ENCODE measurements at regions of chr11 and their contacts with region 1.

Region 1: DNA sequence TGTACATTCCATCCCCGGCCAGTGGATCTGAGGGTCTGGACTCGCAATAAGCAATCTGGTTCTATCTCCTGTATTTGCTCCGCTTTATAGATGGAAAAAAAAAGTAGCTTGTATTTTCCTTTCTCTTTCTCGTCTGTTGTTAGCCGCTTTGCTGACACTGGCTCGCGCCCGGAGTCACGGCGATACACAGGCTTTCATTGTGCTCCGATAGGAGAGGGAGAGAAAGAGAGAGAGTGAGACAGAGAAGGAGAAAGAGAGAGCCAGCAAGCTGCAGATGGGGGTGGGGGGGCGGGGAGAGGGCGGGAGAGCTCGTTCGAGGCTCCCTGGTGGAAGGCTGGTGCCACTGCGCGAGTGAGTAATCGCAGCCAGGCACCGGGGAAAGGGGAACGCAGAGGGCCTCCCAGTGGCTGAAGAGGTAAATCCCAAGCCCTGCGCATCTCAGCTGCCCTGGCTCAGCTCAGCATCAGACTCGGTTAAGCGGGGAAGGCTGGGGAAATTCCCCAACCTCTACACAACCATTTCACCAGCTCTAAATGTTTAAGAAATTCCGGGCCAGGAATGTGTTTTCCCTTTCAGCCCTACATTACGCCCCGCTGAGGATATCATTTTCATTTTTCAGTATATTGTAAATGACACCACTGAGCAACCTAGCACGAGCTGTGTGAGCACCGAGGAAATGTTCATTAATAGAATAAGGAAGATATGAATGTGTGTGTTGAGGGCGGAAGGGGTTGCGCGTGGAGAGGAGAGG is at the start of gene MAML2:
- DNase-seq: peak; percentile 84 to 96 (median 89)
- H3K4me3 ChIP-seq: peak within 1 kb of the TSS; percentile 60 to 78
- H3K4me3 Mint-ChIP-seq: peak within 1 kb of the TSS; percentile 91 to 98 (median 94)
- H3K27ac ChIP-seq: peak within 1 kb of the TSS; percentile 75
- H3K27ac Mint-ChIP-seq: peak within 1 kb of the TSS; percentile 86 to 97 (median 96)
- H3K4me1 ChIP-seq: peaks cover 34% of the 10 kb centered on the region
- H3K4me1 Mint-ChIP-seq: peaks cover 23 to 46% (median 30%) of the 10 kb centered on the region in 4 donors
- H3K27me3 ChIP-seq: no peaks in the 10 kb centered on the region
- H3K27me3 Mint-ChIP-seq: no peaks in the 10 kb centered on the region
- total RNA-seq, gene MAML2: 37.5 to 38.3 TPM

Region 2: GRCh38 chr11:96012086-96012824 is 330.9 kb before region 1 on chr11:
- CTCF ChIA-PET with region 1: interaction called, 81 read pairs
- POLR2A ChIA-PET with region 1: interaction called, 69 read pairs
- intact Hi-C with region 1: loop called (anchors 1 kb)
- DNase-seq: peak; percentile 64 to 89 (median 75)
- H3K4me3 ChIP-seq: no peak overlapping the region
- H3K4me3 Mint-ChIP-seq: peak overlapping the region in 7 of 8 donors; percentile 22 to 83 (median 63)
- H3K27ac ChIP-seq: peak overlapping the region; percentile 44
- H3K27ac Mint-ChIP-seq: peak overlapping the region; percentile 64 to 97 (median 93)
- H3K4me1 ChIP-seq: peaks cover 59% of the 10 kb centered on the region
- H3K4me1 Mint-ChIP-seq: peaks cover 9 to 64% (median 52%) of the 10 kb centered on the region in 4 donors
- H3K27me3 ChIP-seq: no peaks in the 10 kb centered on the region
- H3K27me3 Mint-ChIP-seq: no peaks in the 10 kb centered on the region

Region 3: DNA sequence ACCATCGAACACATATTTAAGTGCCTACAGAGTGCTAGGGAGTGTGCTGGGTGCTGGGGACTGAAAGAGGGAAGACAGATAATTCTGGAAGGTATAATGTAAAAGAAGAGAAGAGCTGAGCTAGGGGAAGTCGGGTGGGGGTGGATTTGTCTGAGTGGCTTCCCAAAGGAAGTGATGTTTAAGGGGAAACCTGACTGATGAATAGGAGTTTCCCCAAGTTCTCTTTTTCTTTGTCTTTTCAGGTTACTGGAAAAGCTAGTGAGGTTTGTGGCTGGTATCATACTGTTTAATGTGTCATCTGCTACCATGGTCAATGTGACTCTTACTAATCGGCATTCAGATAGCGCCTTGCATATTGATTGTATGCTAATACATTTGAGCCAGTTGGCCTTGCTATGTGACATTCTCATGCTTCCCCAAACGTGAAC is 267.6 kb before region 1 on chr11:
- CTCF ChIA-PET with region 1: interaction called, 20 read pairs
- POLR2A ChIA-PET with region 1: interaction called, 3 read pairs
- intact Hi-C with region 1: no loop called
- DNase-seq: no peak
- H3K4me3 ChIP-seq: no peak overlapping the region
- H3K4me3 Mint-ChIP-seq: peak overlapping the region in 5 of 8 donors; percentile 19 to 63 (median 53)
- H3K27ac ChIP-seq: no peak overlapping the region
- H3K27ac Mint-ChIP-seq: peak overlapping the region; percentile 10 to 81 (median 26)
- H3K4me1 ChIP-seq: peaks cover 24% of the 10 kb centered on the region
- H3K4me1 Mint-ChIP-seq: peaks cover 33 to 55% (median 46%) of the 10 kb centered on the region in 4 donors
- H3K27me3 ChIP-seq: no peaks in the 10 kb centered on the region
- H3K27me3 Mint-ChIP-seq: no peaks in the 10 kb centered on the region

Region 4: DNA sequence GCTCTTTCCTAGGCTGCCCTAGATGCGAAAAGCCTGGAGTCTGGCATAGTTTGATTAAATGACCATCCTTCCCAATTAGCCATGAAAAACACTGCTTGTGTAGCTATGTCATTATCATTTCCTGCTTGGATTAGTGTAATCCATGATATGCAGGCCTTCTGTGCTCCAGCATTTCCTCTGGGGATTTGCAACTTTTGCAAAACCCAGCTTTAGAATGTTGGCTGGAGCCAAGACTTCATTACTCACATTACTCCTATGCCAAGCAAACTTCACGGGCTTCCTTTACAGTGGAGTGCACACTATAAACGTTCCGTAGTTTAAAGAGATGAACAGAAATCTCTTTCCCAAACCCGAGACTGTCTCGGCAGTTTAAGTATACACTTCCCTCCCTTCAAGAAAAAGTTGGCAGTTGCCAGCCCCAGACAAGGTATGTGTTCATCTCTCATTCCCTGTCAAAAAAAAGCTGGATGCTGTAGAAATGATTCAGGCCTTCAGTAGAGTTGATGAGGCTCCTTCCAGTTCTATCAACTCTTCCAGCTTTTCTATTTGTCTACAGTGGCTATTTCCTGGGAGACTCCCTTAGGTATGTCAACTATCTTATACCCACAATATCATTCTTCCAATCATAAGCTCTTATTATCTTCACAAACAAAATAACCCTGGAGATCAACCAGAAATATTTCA is 180.2 kb before region 1 on chr11:
- CTCF ChIA-PET with region 1: interaction called, 12 read pairs
- POLR2A ChIA-PET with region 1: interaction called, 3 read pairs
- intact Hi-C with region 1: no loop called
- DNase-seq: no peak
- H3K4me3 ChIP-seq: no peak overlapping the region
- H3K4me3 Mint-ChIP-seq: no peak overlapping the region
- H3K27ac ChIP-seq: no peak overlapping the region
- H3K27ac Mint-ChIP-seq: peak overlapping the region in 2 of 7 donors; percentile 14 to 25
- H3K4me1 ChIP-seq: peaks cover 27% of the 10 kb centered on the region
- H3K4me1 Mint-ChIP-seq: peaks cover 32 to 52% (median 42%) of the 10 kb centered on the region in 4 donors
- H3K27me3 ChIP-seq: no peaks in the 10 kb centered on the region
- H3K27me3 Mint-ChIP-seq: no peaks in the 10 kb centered on the region

Region 5: DNA sequence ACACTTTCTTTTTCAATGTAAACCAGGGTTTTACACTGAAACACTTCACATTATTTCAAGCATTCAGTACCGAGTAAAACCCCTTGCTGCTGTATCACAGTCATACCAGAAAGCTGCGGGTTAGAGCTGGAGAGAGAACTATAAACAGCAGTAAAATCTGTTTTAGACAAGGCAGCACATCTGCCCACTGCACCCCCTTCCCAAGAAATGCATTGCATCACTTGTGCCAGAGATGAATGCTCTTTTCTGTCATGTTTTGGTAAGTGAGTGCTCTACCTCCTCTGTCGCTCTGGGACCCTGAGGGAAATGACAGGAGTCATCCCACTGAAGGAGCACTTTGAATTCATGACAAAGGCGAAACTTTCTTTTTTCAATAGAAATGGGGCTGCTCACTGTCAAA is 107.4 kb before region 1 on chr11:
- CTCF ChIA-PET with region 1: interaction called, 53 read pairs
- POLR2A ChIA-PET with region 1: interaction called, 4 read pairs
- intact Hi-C with region 1: no loop called
- DNase-seq: no peak
- H3K4me3 ChIP-seq: no peak overlapping the region
- H3K4me3 Mint-ChIP-seq: peak overlapping the region in 2 of 8 donors; percentile 6 to 39
- H3K27ac ChIP-seq: no peak overlapping the region
- H3K27ac Mint-ChIP-seq: peak overlapping the region in 5 of 7 donors; percentile 19 to 44 (median 35)
- H3K4me1 ChIP-seq: peaks cover 25% of the 10 kb centered on the region
- H3K4me1 Mint-ChIP-seq: peaks cover 24 to 44% (median 33%) of the 10 kb centered on the region in 4 donors
- H3K27me3 ChIP-seq: no peaks in the 10 kb centered on the region
- H3K27me3 Mint-ChIP-seq: no peaks in the 10 kb centered on the region

Region 6: GRCh38 chr11:96314326-96315020 is 28.7 kb before region 1 on chr11:
- CTCF ChIA-PET with region 1: interaction called, 58 read pairs
- POLR2A ChIA-PET with region 1: interaction called, 34 read pairs
- intact Hi-C with region 1: loop called (anchors 5 kb)
- DNase-seq: peak in 1 of 5 donors; percentile 15
- H3K4me3 ChIP-seq: no peak overlapping the region
- H3K4me3 Mint-ChIP-seq: peak overlapping the region in 7 of 8 donors; percentile 36 to 67 (median 65)
- H3K27ac ChIP-seq: no peak overlapping the region
- H3K27ac Mint-ChIP-seq: peak overlapping the region; percentile 39 to 92 (median 71)
- H3K4me1 ChIP-seq: peaks cover 58% of the 10 kb centered on the region
- H3K4me1 Mint-ChIP-seq: peaks cover 60 to 92% (median 75%) of the 10 kb centered on the region in 4 donors
- H3K27me3 ChIP-seq: no peaks in the 10 kb centered on the region
- H3K27me3 Mint-ChIP-seq: no peaks in the 10 kb centered on the region

Region 7: GRCh38 chr11:96400697-96401096 is 57.6 kb after region 1 on chr11:
- CTCF ChIA-PET with region 1: no interaction called
- POLR2A ChIA-PET with region 1: no interaction called
- intact Hi-C with region 1: no loop called
- DNase-seq: no peak
- H3K4me3 ChIP-seq: no peak overlapping the region
- H3K4me3 Mint-ChIP-seq: no peak overlapping the region
- H3K27ac ChIP-seq: no peak overlapping the region
- H3K27ac Mint-ChIP-seq: no peak overlapping the region
- H3K4me1 ChIP-seq: no peaks in the 10 kb centered on the region
- H3K4me1 Mint-ChIP-seq: no peaks in the 10 kb centered on the region
- H3K27me3 ChIP-seq: no peaks in the 10 kb centered on the region
- H3K27me3 Mint-ChIP-seq: peaks cover 2 to 10% of the 10 kb centered on the region in 2 donors

Measured in CD4-positive, alpha-beta memory T cell (primary cell).